ENCODE measurements at regions of chr12 and their contacts with region 1.

Region 1: DNA sequence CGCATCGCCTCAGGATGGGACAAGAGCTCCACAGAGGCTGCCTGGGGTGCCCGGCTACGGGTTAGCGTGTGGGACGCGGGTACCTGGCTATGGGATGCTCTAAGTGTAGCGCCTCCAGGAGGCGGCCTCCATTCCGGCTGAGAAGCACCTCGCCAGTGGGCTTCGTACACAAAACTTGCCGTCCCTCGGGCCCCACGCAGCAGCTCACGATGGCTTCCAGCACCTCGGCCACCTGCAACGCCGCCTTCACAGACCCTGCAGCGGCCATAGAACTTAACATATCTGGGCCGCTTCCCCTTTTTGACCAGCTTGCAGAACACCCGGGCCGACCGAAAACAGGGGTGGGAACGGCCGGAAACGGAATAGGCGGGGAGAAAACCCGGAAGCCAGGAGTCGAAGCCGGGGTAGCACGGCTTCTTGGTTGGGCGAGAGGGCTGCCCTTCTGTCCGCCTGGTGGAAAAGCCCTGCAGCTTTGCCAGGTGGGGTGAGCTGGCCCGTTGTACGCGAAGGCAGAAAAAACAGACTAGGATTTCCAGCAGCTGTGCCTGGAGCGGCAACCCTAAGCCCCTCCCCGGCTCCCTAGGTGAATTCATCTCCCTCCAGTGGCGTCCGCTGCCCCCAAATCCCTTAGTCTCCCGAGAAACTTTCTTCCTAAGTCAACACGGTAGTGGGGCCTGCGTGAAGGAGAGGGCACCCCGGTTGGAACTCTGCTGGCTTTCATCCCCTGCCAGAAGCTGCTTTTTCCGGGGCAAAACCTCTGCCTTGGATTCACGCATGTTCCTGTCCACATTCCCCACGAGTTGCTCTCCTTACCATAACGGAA is at the start of gene BBS10:
- DNase-seq: peak; percentile 96
- H3K4me3 ChIP-seq: peak within 1 kb of the TSS; percentile 74
- H3K27ac ChIP-seq: peak within 1 kb of the TSS; percentile 76
- H3K4me1 ChIP-seq: peaks cover 16% of the 10 kb centered on the region
- CTCF ChIP-seq: peak; percentile 60
- total RNA-seq, gene BBS10: 5.8 and 6.2 TPM in 2 replicates

Region 2: DNA sequence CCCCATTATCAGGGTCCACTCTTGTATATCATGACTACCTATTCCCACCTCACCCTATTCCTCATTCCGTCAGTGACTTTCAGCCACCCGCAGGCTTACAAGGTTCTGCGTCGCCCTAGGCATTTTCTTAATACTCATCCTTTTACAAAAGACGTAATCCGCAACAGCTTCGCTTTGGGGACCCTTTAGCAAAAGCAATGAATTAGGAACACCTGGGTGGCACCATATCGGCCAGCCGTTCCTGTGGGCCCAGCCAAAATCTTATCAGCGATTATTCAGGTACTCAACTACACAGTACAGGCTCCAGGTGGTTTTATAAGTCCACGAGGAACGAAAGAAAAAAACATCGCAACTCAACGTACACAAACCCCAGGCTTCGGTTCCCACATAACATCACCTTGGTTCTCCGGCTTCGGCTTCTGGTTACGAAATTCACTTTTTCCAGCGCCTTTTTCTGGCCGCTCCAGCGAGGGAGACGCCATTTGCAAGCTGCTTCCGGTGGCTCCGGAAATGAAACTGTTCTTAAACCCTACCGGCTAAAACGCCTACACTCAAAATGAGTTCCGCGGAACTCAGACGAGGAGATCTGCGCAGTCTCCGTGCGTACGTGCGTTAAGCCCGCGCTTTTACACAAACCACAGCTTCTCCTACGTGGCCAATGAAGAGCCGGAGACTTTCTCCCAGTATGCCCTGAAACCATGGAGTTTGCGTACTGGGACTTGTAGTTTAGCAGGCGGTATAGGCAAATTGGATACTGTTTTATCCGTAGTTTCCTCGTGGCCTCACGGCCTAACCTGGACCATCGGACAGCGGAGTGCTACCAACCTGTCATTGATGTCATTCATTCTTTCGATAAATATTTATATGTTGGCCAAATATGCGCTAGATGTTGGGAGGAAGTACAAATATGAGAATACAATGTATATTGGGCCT is 836.9 kb before region 1 on chr12 and contains the start of gene KRR1:
- CTCF ChIA-PET with region 1: no interaction called
- POLR2A ChIA-PET with region 1: interaction called, 3 read pairs
- intact Hi-C with region 1: loop called (anchors 1 kb)
- DNase-seq: peak; percentile 96
- H3K4me3 ChIP-seq: peak within 1 kb of the TSS; percentile 97
- H3K27ac ChIP-seq: peak within 1 kb of the TSS; percentile 62
- H3K4me1 ChIP-seq: peaks cover 22% of the 10 kb centered on the region
- CTCF ChIP-seq: no peak
- total RNA-seq, gene KRR1: 27.6 and 44.0 TPM in 2 replicates

Region 3: DNA sequence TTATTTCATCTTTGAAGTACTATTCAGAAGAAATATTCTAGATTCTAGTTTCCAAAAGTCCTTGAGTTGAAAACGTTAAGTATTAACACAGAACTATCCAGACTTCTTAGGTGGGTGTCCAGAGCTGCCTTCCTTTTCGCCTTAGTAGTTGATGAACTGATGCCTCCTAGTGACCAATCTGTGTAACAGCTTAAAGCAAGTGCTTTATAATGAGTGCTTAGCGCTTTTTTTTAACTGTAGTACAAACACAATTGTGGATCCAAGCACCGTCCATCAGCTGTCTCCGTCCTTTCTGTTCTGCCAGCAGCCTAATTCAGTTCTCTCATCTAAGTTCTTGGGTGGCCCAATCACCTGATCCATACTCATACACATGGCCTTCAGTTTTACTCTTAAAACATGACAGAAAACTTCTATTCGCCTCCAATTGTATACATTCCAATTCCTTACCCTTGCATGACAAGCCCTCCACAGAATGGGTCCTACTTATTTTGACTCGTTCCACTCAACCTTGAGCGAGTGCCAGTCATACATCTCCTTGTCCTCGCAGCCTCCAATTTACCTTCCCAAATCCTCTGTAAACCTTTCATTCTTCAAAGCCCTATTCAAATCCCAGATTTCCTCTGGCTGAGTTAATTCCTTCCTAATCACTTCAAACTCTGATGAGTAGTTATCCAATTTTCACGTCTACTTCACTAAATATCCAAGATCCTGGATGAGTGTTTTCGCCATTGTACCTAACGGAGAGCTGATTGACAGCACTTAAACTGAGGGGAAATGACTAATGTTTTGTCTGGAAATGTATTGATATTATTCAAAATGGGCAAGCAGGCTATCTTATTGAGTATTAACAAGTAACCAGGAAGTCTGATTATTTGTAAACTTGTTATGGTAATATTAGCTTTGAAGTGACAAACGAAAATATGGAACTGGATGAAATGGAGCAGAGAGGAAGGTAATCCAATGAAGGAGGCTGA is 310.9 kb before region 1 on chr12:
- CTCF ChIA-PET with region 1: no interaction called
- POLR2A ChIA-PET with region 1: interaction called, 6 read pairs
- intact Hi-C with region 1: loop called (anchors 2 kb)
- DNase-seq: peak; percentile 85
- H3K4me3 ChIP-seq: no peak overlapping the region
- H3K27ac ChIP-seq: no peak overlapping the region
- H3K4me1 ChIP-seq: peaks cover 2% of the 10 kb centered on the region
- CTCF ChIP-seq: peak; percentile 94

Region 4: DNA sequence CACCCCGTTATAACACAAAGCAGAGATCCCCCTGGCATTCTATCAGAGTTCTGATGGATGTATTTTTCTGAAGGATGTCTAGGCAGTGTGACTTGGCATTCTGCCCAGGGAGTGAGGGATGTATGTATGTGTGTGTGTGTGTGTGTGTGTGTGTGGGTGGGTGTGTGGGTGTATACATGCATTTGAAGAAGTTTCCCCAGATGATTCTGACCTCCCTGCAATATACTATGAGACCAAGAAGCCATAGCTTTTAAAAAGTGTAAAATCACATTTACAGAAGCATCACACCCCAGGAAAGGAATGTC is 204.1 kb before region 1 on chr12:
- CTCF ChIA-PET with region 1: no interaction called
- POLR2A ChIA-PET with region 1: no interaction called
- intact Hi-C with region 1: no loop called
- DNase-seq: no peak
- H3K4me3 ChIP-seq: no peak overlapping the region
- H3K27ac ChIP-seq: no peak overlapping the region
- H3K4me1 ChIP-seq: no peaks in the 10 kb centered on the region
- CTCF ChIP-seq: no peak

Region 5: GRCh38 chr12:76445469-76445868 is 97.2 kb after region 1 on chr12:
- CTCF ChIA-PET with region 1: no interaction called
- POLR2A ChIA-PET with region 1: no interaction called
- intact Hi-C with region 1: no loop called
- DNase-seq: no peak
- H3K4me3 ChIP-seq: no peak overlapping the region
- H3K27ac ChIP-seq: no peak overlapping the region
- H3K4me1 ChIP-seq: no peaks in the 10 kb centered on the region
- CTCF ChIP-seq: no peak

Region 6: GRCh38 chr12:76455582-76456345 is 107.5 kb after region 1 on chr12:
- CTCF ChIA-PET with region 1: no interaction called
- POLR2A ChIA-PET with region 1: no interaction called
- intact Hi-C with region 1: loop called (anchors 2 kb)
- DNase-seq: peak; percentile 60
- H3K4me3 ChIP-seq: no peak overlapping the region
- H3K27ac ChIP-seq: no peak overlapping the region
- H3K4me1 ChIP-seq: peaks cover 7% of the 10 kb centered on the region
- CTCF ChIP-seq: peak; percentile 86

Region 7: DNA sequence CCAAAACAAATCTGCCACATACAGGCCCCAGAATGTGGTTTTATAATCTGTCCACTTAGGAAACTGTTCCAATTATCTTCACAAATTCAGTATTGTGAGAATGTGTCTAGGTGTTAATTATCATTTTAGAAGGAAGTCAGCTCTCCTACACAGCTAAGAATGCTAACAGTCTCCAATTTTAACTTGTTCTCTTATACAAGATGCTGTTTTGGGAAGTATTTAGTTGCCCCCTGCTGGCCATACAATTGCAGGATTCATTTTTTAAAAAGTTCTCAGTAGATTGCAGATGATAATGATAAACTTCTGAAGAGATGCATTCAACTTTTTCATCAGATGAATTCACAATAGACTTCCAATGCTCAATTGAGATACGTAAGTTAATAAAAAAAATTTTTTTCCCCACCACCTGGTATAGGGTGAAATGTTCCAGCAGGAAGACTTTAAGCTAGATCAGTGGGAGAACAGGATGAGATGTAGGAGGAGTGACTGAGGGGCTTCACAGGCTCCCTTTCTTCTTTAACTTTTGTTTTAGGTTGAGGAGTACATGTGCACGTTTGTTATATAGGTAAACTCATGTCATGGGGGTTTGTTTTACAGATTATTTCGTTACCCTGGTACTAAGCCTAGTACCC is 238.6 kb after region 1 on chr12:
- CTCF ChIA-PET with region 1: no interaction called
- POLR2A ChIA-PET with region 1: interaction called, 6 read pairs
- intact Hi-C with region 1: loop called (anchors 2 kb)
- DNase-seq: peak; percentile 62
- H3K4me3 ChIP-seq: no peak overlapping the region
- H3K27ac ChIP-seq: no peak overlapping the region
- H3K4me1 ChIP-seq: no peaks in the 10 kb centered on the region
- CTCF ChIP-seq: peak; percentile 95

Measured in OCI-LY7 (cell line).